Activated naive CD4-positive, alpha-beta T cell treated with anti-CD3 and anti-CD28 coated beads for 36 hours (primary cell): ENCODE measurements at regions of chr3 and their contacts with region 1.

Region 1: DNA sequence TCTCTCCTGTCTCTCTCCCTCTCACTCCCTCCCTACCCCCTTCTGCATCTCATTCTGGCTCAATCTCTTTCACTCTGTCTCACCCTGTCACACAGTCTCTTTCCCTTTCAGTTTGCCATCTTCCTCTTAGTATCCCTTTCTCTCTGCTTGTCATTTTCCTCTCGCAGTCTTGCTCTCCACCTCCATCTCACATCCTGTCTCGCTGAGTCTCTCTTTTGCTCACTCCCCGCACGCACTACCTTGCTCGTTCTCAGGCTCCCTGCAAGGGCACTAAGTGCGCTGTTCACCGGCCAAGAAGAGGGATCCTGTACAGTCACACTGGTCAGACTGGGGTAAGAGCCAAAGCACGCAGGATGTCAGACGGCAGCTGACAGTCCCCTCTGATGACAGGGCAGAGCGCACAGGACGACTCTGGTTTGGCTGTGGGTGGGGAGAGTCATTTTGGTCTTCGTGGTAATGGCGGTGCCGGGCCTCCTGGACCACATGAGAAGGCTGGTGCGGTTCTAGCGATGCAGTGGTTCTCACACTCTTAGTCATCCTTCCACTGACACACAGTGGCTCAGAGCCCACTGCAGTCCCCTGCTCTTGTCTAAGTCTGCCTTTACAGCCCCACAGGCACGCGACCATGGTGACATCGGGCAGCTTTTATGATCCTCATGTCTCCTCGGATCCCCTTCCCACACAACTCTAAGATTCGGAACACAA is 356.8 kb downstream of the FOXP1 start:
- DNase-seq: peak; percentile 95
- H3K4me3 Mint-ChIP-seq: peak overlapping the region; percentile 77
- H3K27ac Mint-ChIP-seq: peak overlapping the region; percentile 94
- H3K4me1 Mint-ChIP-seq: peaks cover 83% of the 10 kb centered on the region
- H3K27me3 Mint-ChIP-seq: no peaks in the 10 kb centered on the region

Region 2: DNA sequence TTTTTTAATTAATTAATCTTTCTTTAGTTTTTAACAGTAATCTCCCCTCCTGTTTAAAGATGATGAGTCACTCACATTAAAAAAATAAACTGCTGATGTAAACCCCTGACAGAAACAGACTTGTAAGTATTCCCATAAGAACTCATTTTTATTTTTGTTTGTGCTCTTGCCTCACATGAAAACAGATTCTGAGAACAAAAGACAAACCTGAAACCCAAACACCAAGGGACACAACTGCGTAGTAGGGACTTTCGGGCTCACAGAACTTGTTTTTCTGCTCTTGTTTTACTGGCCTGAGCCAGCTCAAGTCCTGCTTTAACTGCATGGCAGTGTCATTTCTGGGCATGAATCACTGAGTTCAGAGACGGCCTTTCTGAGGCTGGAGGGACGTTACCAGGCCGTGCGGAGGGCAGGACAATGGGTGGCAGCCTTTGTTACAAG is 244.0 kb before region 1 on chr3:
- CTCF ChIA-PET with region 1: no interaction called
- intact Hi-C with region 1: loop called (anchors 2 kb)
- DNase-seq: peak; percentile 66
- H3K4me3 Mint-ChIP-seq: no peak overlapping the region
- H3K27ac Mint-ChIP-seq: peak overlapping the region; percentile 96
- H3K4me1 Mint-ChIP-seq: peaks cover 74% of the 10 kb centered on the region
- H3K27me3 Mint-ChIP-seq: no peaks in the 10 kb centered on the region

Region 3: GRCh38 chr3:71149959-71150954 is 76.5 kb before region 1 on chr3:
- CTCF ChIA-PET with region 1: no interaction called
- intact Hi-C with region 1: loop called (anchors 1 kb)
- DNase-seq: no peak
- H3K4me3 Mint-ChIP-seq: peak overlapping the region; percentile 56
- H3K27ac Mint-ChIP-seq: peak overlapping the region; percentile 68
- H3K4me1 Mint-ChIP-seq: peaks cover 64% of the 10 kb centered on the region
- H3K27me3 Mint-ChIP-seq: no peaks in the 10 kb centered on the region

Region 4: DNA sequence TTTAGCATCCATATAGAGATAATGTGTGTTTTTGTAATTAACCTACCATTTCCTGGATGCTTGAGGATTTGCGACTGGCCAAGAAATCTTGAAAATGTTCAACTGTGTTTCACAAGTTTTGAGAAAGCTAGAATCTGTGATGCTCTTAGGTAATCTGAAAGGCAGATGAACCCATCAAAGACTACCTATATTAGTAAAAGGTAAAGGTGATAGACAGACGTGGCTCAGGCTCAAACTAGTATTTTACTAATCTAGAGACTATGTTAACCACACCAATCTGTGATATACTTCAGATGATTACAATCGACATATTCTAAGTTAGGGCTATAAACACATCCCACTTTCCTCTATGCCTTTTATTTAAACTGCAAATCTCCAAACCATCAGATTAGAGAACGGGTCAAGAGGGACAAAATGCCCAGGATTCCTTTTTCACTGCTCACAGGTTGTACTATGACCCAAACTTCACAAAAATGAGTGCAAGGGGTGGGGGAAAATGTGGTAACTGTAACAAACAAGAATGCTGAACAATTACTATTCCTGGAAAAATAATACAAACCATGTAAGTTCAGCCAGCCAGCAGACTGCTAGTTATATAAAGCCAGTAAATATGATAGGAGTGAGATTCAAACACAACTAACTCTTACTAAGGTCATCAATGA is 61.7 kb after region 1 on chr3:
- CTCF ChIA-PET with region 1: interaction called, 3 read pairs
- intact Hi-C with region 1: loop called (anchors 1 kb)
- DNase-seq: no peak
- H3K4me3 Mint-ChIP-seq: no peak overlapping the region
- H3K27ac Mint-ChIP-seq: peak overlapping the region; percentile 32
- H3K4me1 Mint-ChIP-seq: peaks cover 66% of the 10 kb centered on the region
- H3K27me3 Mint-ChIP-seq: no peaks in the 10 kb centered on the region

Region 5: DNA sequence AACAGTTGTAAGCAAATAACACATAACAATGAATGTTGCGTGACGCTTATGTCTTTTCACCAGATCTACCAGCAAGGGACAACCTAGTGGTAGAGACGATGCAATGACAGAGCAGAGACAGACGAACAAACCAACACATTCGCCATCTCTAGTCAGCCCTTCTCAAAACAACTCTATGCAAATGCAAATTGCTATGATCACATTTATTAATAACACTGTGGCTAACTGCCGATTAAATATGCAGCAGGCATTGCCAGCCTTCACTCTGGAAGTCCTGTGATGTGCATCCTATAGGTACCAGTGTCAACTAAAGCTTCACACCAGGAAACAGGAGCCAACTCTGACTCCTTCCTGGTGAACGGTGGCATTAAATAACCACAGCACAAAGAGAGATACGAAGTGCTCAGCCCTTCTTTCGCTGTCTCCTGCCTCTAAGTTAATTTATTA is 262.6 kb after region 1 on chr3:
- CTCF ChIA-PET with region 1: no interaction called
- intact Hi-C with region 1: loop called (anchors 2 kb)
- DNase-seq: peak; percentile 35
- H3K4me3 Mint-ChIP-seq: peak overlapping the region; percentile 67
- H3K27ac Mint-ChIP-seq: peak overlapping the region; percentile 88
- H3K4me1 Mint-ChIP-seq: peaks cover 88% of the 10 kb centered on the region
- H3K27me3 Mint-ChIP-seq: no peaks in the 10 kb centered on the region

Region 6: DNA sequence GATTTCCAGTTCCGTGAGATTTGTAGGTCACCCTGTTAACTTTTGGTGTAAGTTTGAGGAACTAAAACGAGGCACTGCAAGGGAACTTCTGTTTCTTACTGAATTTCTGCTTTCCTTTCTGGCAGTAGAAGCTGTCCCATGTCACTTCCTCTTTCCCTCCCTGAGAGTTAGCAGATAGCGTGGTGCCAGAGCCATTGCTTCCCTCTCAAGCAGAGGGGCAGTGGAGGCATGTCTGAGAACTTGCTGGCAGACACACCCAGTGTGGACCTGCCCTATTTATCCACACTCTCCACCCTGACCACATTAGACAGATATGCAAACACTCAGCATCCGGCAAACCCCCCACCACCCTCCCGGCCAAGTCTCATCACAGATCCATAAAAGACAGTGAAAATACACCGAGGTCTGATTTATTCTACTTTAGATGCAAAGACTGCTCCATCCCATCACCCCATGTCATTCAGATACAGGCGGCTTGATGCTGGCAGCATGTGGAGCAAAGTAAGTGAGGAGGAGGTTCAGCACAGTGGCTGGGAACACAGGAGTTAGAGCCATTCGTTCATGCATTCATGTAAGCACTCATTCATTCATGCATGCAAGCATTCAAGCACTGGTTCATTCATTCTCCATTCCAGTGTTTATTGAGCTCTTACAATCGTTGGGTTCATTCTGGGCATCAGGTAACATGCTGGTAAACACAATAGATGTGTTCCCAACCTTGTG is 1296.9 kb after region 1 on chr3:
- CTCF ChIA-PET with region 1: no interaction called
- intact Hi-C with region 1: loop called (anchors 1 kb)
- DNase-seq: peak; percentile 30
- H3K4me3 Mint-ChIP-seq: no peak overlapping the region
- H3K27ac Mint-ChIP-seq: no peak overlapping the region
- H3K4me1 Mint-ChIP-seq: peaks cover 44% of the 10 kb centered on the region
- H3K27me3 Mint-ChIP-seq: peaks cover 2% of the 10 kb centered on the region